Vagina (tissue), 2 donors: ENCODE measurements at regions of chr11 and their contacts with region 1.

Region 1: GRCh38 chr11:19742588-19743292 is 30.1 kb downstream of the NAV2 start:
- DNase-seq: no peak
- H3K4me3 ChIP-seq: no peak overlapping the region
- H3K27ac ChIP-seq: peak overlapping the region; percentile 22
- H3K4me1 ChIP-seq: no peaks in the 10 kb centered on the region
- H3K27me3 ChIP-seq: no peaks in the 10 kb centered on the region
- CTCF ChIP-seq: peak; percentile 93 to 98 (median 97)
- POLR2A ChIP-seq: no peak

Region 2: GRCh38 chr11:19561011-19561410 is 181.7 kb before region 1 on chr11:
- intact Hi-C with region 1: loop called (anchors 1 kb)
- DNase-seq: no peak
- H3K4me3 ChIP-seq: no peak overlapping the region
- H3K27ac ChIP-seq: no peak overlapping the region
- H3K4me1 ChIP-seq: peaks cover 12% of the 10 kb centered on the region
- H3K27me3 ChIP-seq: no peaks in the 10 kb centered on the region
- CTCF ChIP-seq: no peak
- POLR2A ChIP-seq: no peak

Region 3: DNA sequence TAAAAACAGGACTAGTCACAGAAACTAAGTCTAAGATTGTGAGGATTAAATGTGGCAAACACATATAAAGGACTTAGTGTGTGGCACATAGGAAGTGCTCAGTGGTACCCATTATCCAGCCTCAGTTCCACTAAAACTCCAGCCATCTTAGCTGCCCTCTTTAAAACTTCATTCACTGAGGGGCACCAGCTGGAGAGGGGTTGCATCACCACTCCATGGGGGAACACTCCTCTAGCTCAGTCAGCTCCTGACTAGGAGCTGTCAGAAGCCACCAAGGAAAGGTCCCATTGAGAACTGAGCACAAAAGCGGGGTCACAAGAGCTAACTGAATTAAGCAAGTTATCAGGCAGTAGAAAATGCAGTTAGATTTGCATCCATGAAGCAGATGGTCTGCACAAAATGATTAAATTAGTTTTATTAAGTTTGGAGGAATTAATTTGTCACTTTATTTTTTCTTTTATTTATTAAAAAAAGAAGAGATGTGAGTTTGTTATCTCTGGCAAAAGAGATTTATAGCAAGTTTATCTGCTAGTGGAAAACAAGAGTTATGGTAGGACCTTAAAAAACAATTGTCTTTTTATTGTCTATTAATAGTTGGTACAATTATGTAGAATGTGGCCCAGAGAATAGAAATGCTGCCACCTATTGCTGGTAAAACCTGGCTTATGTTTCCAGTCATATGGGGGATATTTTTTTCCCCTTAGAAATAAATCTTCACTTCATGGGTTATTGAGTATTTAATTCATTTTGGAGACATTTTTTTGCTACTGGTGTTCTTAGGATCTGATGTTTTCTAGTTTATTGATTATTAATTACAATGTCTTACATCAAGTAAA is 65.6 kb after region 1 on chr11:
- intact Hi-C with region 1: no loop called
- DNase-seq: no peak
- H3K4me3 ChIP-seq: no peak overlapping the region
- H3K27ac ChIP-seq: no peak overlapping the region
- H3K4me1 ChIP-seq: peaks cover 3% of the 10 kb centered on the region
- H3K27me3 ChIP-seq: no peaks in the 10 kb centered on the region
- CTCF ChIP-seq: no peak
- POLR2A ChIP-seq: no peak

Region 4: DNA sequence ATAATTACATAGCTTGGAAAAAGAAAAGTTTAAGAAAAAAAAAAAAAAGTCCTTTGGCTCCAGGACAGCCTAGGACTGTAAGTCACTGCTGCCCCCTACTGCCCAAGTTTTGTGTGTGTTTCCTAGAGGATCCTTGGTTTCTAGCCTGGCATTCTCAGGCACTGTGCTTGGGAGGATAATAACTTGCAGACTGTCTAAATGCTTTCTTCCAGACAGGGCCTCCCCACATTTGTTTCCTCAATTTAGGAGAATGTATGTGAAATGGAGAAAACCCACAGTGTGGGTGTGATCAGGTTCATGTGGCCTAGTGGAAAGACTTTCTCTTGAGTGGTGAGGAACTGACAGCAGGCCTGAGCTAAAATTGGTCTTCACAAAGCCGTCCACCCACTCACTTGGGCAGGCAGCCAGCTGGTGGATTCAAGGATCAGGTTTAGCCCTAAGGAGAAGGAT is 160.9 kb after region 1 on chr11:
- intact Hi-C with region 1: loop called (anchors 10 kb)
- DNase-seq: no peak
- H3K4me3 ChIP-seq: no peak overlapping the region
- H3K27ac ChIP-seq: no peak overlapping the region
- H3K4me1 ChIP-seq: no peaks in the 10 kb centered on the region
- H3K27me3 ChIP-seq: no peaks in the 10 kb centered on the region
- CTCF ChIP-seq: peak; percentile 12 to 64 (median 62)
- POLR2A ChIP-seq: no peak